Activated CD4-positive, alpha-beta memory T cell treated with anti-CD3 and anti-CD28 coated beads for 36 hours (primary cell): ENCODE measurements at regions of chr10 and their contacts with region 1.

Region 1: GRCh38 chr10:121753726-121754476 is 155.7 kb upstream of the FGFR2 start:
- DNase-seq: no peak
- H3K4me3 Mint-ChIP-seq: no peak overlapping the region
- H3K27ac Mint-ChIP-seq: peak overlapping the region; percentile 68
- H3K4me1 Mint-ChIP-seq: peaks cover 23% of the 10 kb centered on the region
- H3K27me3 Mint-ChIP-seq: no peaks in the 10 kb centered on the region

Region 2: DNA sequence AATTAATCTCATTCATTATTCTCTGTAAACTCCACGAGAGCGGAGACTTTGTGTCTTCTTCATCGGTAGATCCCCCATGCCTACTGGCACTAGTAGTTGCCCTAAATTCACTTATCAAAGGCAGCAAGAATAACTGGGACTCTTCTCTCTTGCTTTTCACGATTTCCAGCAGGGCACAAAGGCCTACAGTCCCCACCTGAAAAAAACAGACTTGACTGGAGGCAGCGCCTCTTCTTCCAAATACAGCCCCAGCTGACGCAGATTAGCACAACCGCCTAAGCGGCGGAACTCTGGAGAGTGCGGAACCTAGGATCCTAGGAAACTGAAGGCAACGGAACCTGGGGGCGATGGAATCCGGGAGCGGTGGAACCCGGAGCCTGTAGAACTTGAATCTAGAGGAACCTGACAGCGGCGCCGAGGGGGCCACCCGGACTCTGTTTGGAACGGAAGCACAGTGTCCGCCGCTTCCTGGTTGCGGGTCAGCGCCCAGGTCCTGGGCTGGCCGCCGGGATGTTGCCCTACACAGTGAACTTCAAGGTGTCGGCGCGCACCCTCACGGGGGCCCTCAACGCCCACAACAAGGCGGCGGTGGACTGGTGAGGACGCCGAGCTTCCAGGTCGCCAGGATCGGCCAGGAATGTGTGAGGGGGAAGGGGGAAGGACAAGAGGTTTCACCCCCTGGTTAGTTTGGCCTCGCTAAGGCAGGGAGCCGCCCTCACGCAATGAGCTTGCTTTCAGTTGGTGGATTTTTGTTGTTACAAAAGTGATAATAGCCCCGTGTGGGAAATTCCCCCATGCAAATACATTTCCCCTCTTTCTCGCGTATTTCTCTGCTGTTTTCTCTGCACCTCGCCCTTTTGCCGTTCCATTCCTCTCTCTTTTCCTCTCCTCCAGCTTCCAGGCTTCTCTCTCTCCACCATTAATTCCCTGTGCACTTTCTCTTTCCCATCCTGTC is 902.7 kb before region 1 on chr10 and contains the start of gene WDR11:
- CTCF ChIA-PET with region 1: no interaction called
- POLR2A ChIA-PET with region 1: no interaction called
- intact Hi-C with region 1: loop called (anchors 5 kb)
- DNase-seq: peak; percentile 82
- H3K4me3 Mint-ChIP-seq: peak within 1 kb of the TSS; percentile 96
- H3K27ac Mint-ChIP-seq: peak within 1 kb of the TSS; percentile 82
- H3K4me1 Mint-ChIP-seq: peaks cover 43% of the 10 kb centered on the region
- H3K27me3 Mint-ChIP-seq: peaks cover 2% of the 10 kb centered on the region
- total RNA-seq, gene WDR11: 37.3 to 39.6 TPM

Region 3: GRCh38 chr10:121516093-121516865 is 237.6 kb before region 1 on chr10:
- CTCF ChIA-PET with region 1: no interaction called
- POLR2A ChIA-PET with region 1: no interaction called
- intact Hi-C with region 1: loop called (anchors 2 kb)
- DNase-seq: peak; percentile 19
- H3K4me3 Mint-ChIP-seq: no peak overlapping the region
- H3K27ac Mint-ChIP-seq: no peak overlapping the region
- H3K4me1 Mint-ChIP-seq: peaks cover 9% of the 10 kb centered on the region
- H3K27me3 Mint-ChIP-seq: peaks cover 6% of the 10 kb centered on the region

Region 4: DNA sequence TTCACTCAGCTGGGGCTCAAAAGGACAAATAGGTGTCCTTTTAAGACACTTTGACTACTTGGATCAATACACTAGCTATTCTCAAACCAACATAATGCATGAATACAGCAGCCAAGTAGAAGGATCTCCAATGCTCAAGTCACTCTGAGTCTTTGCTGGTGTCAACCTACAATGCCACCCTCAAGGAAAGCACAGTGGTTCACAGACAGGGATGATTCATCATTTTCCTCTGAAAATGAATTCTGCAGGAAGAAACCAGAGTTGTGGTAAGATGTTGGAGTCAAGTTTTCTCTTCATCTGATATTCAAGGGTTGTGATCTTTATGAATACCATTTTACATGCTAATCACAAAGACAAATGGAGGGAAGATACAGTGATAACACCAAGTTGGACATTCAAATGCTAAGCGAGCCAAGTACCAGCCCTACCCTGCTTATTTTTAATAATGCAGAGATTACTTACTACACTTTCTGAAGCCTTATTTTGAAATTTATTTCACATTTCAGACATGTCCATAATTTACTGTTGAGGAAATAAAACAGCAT is 12.6 kb before region 1 on chr10:
- CTCF ChIA-PET with region 1: interaction called, 3 read pairs
- POLR2A ChIA-PET with region 1: no interaction called
- intact Hi-C with region 1: loop called (anchors 1 kb)
- DNase-seq: no peak
- H3K4me3 Mint-ChIP-seq: no peak overlapping the region
- H3K27ac Mint-ChIP-seq: no peak overlapping the region
- H3K4me1 Mint-ChIP-seq: peaks cover 11% of the 10 kb centered on the region
- H3K27me3 Mint-ChIP-seq: peaks cover 11% of the 10 kb centered on the region

Region 5: DNA sequence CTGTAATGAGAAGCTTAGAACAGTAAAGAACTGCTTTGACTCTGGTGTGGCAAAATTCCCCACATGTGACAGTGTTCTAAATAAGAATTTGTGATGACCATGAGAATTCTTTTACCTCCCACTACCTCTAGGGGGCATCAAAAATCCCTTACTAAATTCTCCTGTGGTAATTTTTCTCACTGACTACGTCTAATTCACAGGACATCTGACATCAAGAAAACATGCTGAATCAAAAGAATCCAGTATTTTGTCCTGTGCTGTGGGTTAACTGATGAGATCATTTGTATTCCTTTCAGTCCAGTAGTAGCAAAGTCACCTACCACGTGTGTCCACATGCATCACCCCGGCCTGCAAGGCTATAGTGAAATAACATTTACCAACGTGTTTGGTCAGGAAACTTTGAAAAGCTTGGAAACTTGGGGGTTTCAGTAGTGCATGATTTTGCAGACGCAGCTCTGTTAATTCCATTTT is 70.1 kb after region 1 on chr10:
- CTCF ChIA-PET with region 1: interaction called, 4 read pairs
- POLR2A ChIA-PET with region 1: no interaction called
- intact Hi-C with region 1: loop called (anchors 1 kb)
- DNase-seq: no peak
- H3K4me3 Mint-ChIP-seq: no peak overlapping the region
- H3K27ac Mint-ChIP-seq: no peak overlapping the region
- H3K4me1 Mint-ChIP-seq: peaks cover 8% of the 10 kb centered on the region
- H3K27me3 Mint-ChIP-seq: no peaks in the 10 kb centered on the region

Region 6: GRCh38 chr10:121845044-121845784 is 91.3 kb after region 1 on chr10:
- CTCF ChIA-PET with region 1: no interaction called
- POLR2A ChIA-PET with region 1: no interaction called
- intact Hi-C with region 1: loop called (anchors 1 kb)
- DNase-seq: peak; percentile 39
- H3K4me3 Mint-ChIP-seq: no peak overlapping the region
- H3K27ac Mint-ChIP-seq: no peak overlapping the region
- H3K4me1 Mint-ChIP-seq: peaks cover 14% of the 10 kb centered on the region
- H3K27me3 Mint-ChIP-seq: no peaks in the 10 kb centered on the region

Region 7: DNA sequence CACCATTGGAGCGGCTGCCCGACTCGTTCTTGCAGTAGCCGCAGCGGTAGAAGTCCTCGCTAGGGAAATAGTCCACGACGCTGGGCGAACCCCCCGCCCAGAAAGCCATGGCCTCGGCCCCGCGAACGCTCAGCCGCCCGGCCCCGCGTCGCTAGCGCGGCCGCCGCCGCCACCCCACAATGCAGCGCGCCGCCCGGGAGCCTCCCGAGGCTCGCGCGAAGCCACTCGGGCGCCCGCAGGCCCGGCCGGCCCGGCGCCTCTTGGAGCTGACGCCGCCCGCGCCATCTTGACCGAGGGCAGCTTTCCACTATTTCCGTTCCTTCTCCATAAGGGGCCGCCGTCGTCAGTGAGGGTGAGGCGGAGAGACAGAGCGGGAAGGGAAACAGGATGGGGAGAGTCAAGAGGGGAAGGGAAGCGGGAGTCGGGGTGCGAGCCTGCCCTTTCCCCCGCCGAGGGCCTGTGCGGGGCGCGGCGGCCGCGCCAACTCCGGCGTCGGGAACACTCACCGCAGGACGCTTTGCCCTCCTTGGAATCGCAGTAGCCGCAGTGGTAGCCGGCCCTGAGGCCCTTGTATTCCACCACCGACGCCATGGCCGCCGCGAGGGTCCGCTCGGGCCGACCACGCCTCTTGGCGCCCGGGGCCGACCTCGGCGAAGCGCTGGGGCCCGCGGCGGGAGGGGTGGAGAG is 174.1 kb after region 1 on chr10 and contains the start of gene ATE1:
- CTCF ChIA-PET with region 1: no interaction called
- POLR2A ChIA-PET with region 1: no interaction called
- intact Hi-C with region 1: loop called (anchors 1 kb)
- DNase-seq: peak; percentile 87
- H3K4me3 Mint-ChIP-seq: peak within 1 kb of the TSS; percentile 94
- H3K27ac Mint-ChIP-seq: peak within 1 kb of the TSS; percentile 95
- H3K4me1 Mint-ChIP-seq: peaks cover 27% of the 10 kb centered on the region
- H3K27me3 Mint-ChIP-seq: no peaks in the 10 kb centered on the region
- total RNA-seq, gene ATE1: 19.4 to 23.1 TPM